Activated CD8-positive, alpha-beta T cell treated with anti-CD3 and anti-CD28 coated beads for 36 hours (primary cell): ENCODE measurements at regions of chr11 and their contacts with region 1.

Region 1: GRCh38 chr11:6603287-6604080 is at the starts of genes ILK and RRP8:
- DNase-seq: peak; percentile 90
- ATAC-seq: peak; percentile 81
- H3K4me3 Mint-ChIP-seq: no peak within 1 kb of the TSS
- H3K27ac Mint-ChIP-seq: no peak within 1 kb of the TSS
- H3K4me1 Mint-ChIP-seq: peaks cover 49% of the 10 kb centered on the region
- H3K27me3 Mint-ChIP-seq: no peaks in the 10 kb centered on the region
- CTCF ChIP-seq: no peak
- total RNA-seq, gene ILK: 70.6 to 71.7 TPM
- total RNA-seq, gene RRP8: 39.6 to 43.1 TPM

Region 2: DNA sequence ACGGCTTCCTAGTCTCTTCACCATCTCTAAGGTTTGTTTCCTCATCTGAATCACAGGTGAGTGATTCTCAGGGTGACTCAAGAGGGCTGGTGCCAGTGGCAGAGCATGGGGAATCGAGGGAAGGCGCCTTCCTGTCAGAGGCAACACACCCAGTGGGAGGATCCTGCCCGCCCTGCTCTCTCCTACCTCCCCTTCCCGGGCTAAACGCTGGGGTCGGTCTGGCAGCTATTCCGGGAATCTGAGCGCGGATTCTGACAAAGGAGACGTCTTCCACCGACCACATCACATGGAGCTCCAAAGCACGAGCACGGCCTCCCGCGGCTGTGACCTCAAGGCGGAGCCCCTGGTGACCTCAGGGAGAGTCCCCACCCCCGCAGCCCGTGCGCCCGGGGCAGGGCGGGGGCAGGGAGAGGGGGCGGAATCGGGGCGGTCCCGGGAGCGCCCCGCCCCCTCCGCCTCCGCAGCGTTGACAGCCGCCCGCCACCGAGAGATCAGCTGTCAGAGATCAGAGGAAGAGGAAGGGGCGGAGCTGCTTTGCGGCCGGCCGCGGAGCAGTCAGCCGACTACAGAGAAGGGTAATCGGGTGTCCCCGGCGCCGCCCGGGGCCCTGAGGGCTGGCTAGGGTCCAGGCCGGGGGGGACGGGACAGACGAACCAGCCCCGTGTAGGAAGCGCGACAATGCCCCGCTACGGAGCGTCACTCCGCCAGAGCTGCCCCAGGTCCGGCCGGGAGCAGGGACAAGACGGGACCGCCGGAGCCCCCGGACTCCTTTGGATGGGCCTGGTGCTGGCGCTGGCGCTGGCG is 213.4 kb before region 1 on chr11 and contains the start of gene SMPD1:
- CTCF ChIA-PET with region 1: no interaction called
- POLR2A ChIA-PET with region 1: interaction called, 4 read pairs
- intact Hi-C with region 1: loop called (anchors 10 kb)
- DNase-seq: peak; percentile 95
- ATAC-seq: peak; percentile 83
- H3K4me3 Mint-ChIP-seq: peak within 1 kb of the TSS; percentile 79
- H3K27ac Mint-ChIP-seq: peak within 1 kb of the TSS; percentile 94
- H3K4me1 Mint-ChIP-seq: peaks cover 44% of the 10 kb centered on the region
- H3K27me3 Mint-ChIP-seq: no peaks in the 10 kb centered on the region
- CTCF ChIP-seq: no peak
- total RNA-seq, gene SMPD1: 10.6 to 11.2 TPM

Region 3: GRCh38 chr11:6568191-6568918 is 35.1 kb before region 1 on chr11:
- CTCF ChIA-PET with region 1: no interaction called
- POLR2A ChIA-PET with region 1: no interaction called
- intact Hi-C with region 1: no loop called
- DNase-seq: no peak
- ATAC-seq: no peak
- H3K4me3 Mint-ChIP-seq: no peak overlapping the region
- H3K27ac Mint-ChIP-seq: no peak overlapping the region
- H3K4me1 Mint-ChIP-seq: no peaks in the 10 kb centered on the region
- H3K27me3 Mint-ChIP-seq: no peaks in the 10 kb centered on the region
- CTCF ChIP-seq: no peak

Region 4: DNA sequence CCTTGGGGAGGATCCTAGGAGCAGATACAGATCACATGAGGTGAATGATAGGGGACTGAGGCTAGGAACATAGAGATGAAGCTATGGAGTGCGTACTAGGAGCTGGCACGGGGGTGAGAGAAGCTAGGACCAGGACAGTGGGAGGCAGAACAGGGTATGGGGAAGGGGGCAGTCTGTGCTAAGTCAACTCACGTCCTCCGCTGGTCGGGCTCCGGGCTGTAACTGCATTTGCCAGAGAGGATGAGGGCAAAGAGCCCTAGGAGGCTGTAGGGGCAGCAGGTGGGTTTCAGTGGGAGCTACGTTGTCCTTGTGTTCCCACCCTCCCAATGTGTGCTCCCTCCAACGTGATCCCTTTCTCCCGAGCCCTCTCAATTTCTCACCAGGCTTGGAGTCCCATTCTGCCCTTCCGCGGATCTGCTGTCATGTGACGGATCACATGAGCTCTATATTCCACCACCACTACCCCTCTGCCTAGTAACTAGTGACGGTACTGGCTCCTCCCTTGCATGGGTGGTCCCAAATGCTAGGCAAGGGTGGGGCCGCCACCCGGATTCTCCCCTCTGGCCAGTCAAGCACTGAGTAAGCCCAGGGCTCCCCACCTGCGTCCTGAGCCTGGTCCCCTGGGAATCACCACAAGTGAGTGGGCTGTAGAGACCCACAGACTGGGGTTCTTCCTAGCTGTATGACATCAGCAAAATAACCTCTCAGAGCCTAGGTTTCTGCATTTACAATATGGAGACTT is 15.7 kb after region 1 on chr11 and contains the start of gene TPP1:
- CTCF ChIA-PET with region 1: interaction called, 17 read pairs
- POLR2A ChIA-PET with region 1: interaction called, 18 read pairs
- intact Hi-C with region 1: no loop called
- DNase-seq: peak; percentile 96
- ATAC-seq: peak; percentile 98
- H3K4me3 Mint-ChIP-seq: no peak within 1 kb of the TSS
- H3K27ac Mint-ChIP-seq: no peak within 1 kb of the TSS
- H3K4me1 Mint-ChIP-seq: peaks cover 3% of the 10 kb centered on the region
- H3K27me3 Mint-ChIP-seq: no peaks in the 10 kb centered on the region
- CTCF ChIP-seq: no peak
- total RNA-seq, gene TPP1: 28.1 to 31.4 TPM

Region 5: DNA sequence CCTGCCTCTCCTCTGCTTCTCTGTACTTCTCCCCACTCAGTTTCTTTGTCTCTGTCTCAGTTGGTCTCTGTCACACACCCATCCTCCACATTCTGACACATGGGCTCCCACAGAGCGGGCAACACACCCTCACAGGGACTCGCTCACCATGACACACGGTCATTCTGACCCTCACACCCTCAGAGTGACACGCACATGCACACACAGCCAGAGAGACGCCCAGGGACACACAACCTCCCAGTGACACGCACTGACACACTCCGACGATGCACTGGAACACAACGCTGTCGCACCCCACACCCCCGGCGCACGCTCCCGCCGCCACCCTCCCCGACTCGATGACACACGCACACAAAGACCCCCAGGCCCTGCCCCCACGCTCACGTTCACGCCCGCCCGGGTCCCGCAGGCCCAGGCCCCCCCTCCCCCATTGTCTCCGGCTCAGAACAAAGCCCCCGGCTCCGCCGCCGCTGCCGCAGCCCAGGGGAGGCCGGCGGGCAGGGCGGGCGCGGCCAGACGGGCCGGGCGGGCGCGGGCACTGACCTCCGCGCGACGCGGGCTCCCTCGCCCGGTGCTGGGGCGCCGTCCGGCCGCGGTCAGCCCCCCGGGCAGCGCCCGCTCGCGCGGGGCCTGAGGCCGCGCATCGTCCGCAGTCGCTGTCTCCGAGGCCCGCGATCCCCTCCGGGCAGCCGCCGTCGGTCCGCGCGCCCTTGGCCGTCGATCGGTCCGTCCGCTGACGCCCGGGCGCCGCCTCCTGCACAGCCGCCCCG is 51.7 kb after region 1 on chr11:
- CTCF ChIA-PET with region 1: interaction called, 3 read pairs
- POLR2A ChIA-PET with region 1: no interaction called
- intact Hi-C with region 1: loop called (anchors 10 kb)
- DNase-seq: peak; percentile 44
- ATAC-seq: peak; percentile 45
- H3K4me3 Mint-ChIP-seq: no peak overlapping the region
- H3K27ac Mint-ChIP-seq: no peak overlapping the region
- H3K4me1 Mint-ChIP-seq: peaks cover 5% of the 10 kb centered on the region
- H3K27me3 Mint-ChIP-seq: peaks cover 9% of the 10 kb centered on the region
- CTCF ChIP-seq: no peak

Region 6: GRCh38 chr11:6667733-6668374 is 64.4 kb after region 1 on chr11:
- CTCF ChIA-PET with region 1: interaction called, 17 read pairs
- POLR2A ChIA-PET with region 1: interaction called, 4 read pairs
- intact Hi-C with region 1: no loop called
- DNase-seq: peak; percentile 59
- ATAC-seq: peak; percentile 78
- H3K4me3 Mint-ChIP-seq: no peak overlapping the region
- H3K27ac Mint-ChIP-seq: peak overlapping the region; percentile 73
- H3K4me1 Mint-ChIP-seq: peaks cover 57% of the 10 kb centered on the region
- H3K27me3 Mint-ChIP-seq: no peaks in the 10 kb centered on the region
- CTCF ChIP-seq: peak; percentile 75

Region 7: DNA sequence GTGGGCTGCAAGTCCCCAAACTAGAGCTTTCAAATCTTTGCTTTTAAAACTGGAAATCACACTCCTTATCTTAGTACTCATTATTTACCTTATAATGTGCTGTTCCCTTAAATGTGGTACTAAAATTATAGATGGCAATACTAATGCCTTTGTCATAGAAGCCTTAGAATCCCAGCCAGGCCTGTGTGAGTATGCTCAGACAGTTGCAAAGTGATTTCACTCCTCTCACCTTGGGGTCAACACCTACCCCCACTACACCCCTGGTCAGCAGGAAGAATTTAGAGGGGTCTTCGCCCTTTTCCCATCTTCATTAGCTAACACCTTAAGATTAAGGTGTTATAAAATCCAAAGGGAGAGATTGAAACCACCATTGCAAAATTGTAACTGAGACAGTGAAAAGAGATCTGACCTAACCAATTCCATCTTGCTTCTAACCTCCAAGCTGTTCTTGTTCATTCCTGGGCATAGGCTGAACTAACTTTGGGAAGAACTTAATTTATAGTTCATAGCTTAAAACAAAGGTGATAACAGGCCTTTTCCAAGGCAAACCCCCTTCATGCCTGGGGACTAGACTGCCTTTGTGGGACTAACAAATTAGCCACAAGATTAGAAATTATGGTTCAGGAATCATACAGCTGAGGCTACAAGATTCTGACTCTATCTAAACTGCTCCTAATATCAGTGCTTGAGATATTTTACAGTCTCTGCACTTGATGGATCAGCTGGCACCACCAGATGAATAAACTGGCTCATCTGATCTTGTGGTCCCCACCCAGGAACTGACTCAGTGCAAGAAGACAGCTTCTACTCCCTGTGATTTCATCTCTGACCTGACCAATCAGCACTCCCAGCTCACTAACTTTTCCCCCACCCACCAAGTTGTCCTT is 90.1 kb after region 1 on chr11:
- CTCF ChIA-PET with region 1: interaction called, 10 read pairs
- POLR2A ChIA-PET with region 1: interaction called, 3 read pairs
- intact Hi-C with region 1: no loop called
- DNase-seq: peak; percentile 82
- ATAC-seq: peak; percentile 81
- H3K4me3 Mint-ChIP-seq: no peak overlapping the region
- H3K27ac Mint-ChIP-seq: peak overlapping the region; percentile 46
- H3K4me1 Mint-ChIP-seq: peaks cover 31% of the 10 kb centered on the region
- H3K27me3 Mint-ChIP-seq: no peaks in the 10 kb centered on the region
- CTCF ChIP-seq: no peak

Region 8: DNA sequence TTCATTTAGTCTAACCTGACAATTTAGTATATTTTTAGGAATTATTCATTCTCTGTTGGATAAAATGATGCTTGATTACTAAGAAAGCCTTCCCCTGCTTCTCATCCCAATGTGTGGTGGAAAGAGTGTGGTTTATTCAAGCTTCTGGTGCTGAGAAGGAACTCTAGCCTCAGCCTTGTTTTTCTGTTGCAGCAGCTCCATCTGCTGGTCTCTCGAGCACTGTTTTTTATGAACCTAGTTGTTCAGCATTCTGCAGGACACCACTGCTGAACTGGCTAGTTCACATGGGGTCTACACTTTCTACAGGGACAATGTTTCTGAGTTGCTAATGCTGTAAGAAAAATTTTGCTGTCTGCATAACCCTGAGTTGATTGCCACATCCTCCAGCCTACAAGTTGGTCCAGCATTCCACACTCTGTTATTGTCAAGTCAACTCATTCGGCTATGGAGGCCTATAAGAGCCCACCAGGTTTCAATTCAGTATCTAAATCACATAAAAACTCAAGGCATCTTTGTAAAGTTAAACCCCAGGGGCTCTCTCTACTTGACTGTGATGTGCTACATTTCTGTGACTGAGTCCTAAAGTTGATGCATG is 154.0 kb after region 1 on chr11:
- CTCF ChIA-PET with region 1: interaction called, 11 read pairs
- POLR2A ChIA-PET with region 1: no interaction called
- intact Hi-C with region 1: no loop called
- DNase-seq: peak; percentile 82
- ATAC-seq: peak; percentile 84
- H3K4me3 Mint-ChIP-seq: no peak overlapping the region
- H3K27ac Mint-ChIP-seq: no peak overlapping the region
- H3K4me1 Mint-ChIP-seq: peaks cover 13% of the 10 kb centered on the region
- H3K27me3 Mint-ChIP-seq: peaks cover 5% of the 10 kb centered on the region
- CTCF ChIP-seq: peak; percentile 84